Activated CD4-positive, alpha-beta T cell treated with anti-CD3 and anti-CD28 coated beads for 36 hours (primary cell): ENCODE measurements at regions of chr1 and their contacts with region 1.

Region 1: GRCh38 chr1:220926146-220926545 is 46.9 kb downstream of the HLX start:
- DNase-seq: no peak
- ATAC-seq: no peak
- H3K4me3 Mint-ChIP-seq: no peak overlapping the region
- H3K27ac Mint-ChIP-seq: no peak overlapping the region
- H3K4me1 Mint-ChIP-seq: no peaks in the 10 kb centered on the region
- H3K27me3 Mint-ChIP-seq: peaks cover 5% of the 10 kb centered on the region

Region 2: DNA sequence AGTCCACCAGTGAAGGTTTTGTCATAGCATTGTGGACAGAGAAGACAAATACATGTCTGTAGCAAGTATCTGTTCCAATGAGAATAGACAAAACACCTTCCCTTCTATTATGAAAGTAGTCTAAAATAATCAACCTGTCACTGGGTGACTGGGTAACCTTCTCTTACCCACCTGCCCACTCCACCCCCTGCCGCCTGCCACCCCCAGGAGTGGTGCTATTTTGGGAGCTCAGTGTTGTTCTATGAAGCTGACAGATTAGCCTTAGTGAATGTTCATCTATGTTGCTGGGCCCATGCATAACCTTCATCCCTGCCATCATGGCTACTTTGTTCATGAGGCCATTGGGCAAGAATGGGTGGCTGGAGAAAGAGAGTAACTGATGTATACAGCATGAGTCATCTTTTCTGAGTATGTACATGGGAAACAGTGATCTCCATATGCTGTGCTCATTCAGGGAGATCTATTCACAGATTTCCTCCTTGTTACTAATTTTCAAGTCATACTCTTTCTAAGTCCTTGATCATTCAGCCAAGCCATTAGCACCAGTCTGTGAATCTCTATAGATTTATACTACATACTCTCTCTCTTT is 373.4 kb before region 1 on chr1:
- CTCF ChIA-PET with region 1: no interaction called
- POLR2A ChIA-PET with region 1: no interaction called
- intact Hi-C with region 1: no loop called
- DNase-seq: no peak
- ATAC-seq: no peak
- H3K4me3 Mint-ChIP-seq: no peak overlapping the region
- H3K27ac Mint-ChIP-seq: no peak overlapping the region
- H3K4me1 Mint-ChIP-seq: no peaks in the 10 kb centered on the region
- H3K27me3 Mint-ChIP-seq: peaks cover 8% of the 10 kb centered on the region

Region 3: DNA sequence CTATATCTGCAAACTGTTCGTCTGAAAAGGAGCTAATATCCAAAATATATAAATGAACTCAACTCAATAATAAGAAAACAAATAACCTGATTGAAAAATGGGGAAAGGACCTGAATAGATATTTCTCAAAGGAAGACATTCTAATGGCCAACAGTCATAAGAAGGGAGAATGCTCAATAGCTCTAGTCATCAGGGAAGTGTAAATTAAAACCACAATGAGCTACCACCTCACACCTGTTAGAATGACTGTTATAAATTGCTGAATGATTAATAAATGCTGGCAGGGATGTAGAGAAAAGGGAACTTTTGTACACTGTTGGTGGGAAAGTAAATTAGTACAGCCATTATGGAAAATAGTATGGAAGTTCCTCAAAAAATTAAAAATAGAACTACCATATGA is 257.1 kb before region 1 on chr1:
- CTCF ChIA-PET with region 1: no interaction called
- POLR2A ChIA-PET with region 1: no interaction called
- intact Hi-C with region 1: no loop called
- DNase-seq: no peak
- ATAC-seq: no peak
- H3K4me3 Mint-ChIP-seq: no peak overlapping the region
- H3K27ac Mint-ChIP-seq: no peak overlapping the region
- H3K4me1 Mint-ChIP-seq: no peaks in the 10 kb centered on the region
- H3K27me3 Mint-ChIP-seq: peaks cover 8% of the 10 kb centered on the region

Region 4: DNA sequence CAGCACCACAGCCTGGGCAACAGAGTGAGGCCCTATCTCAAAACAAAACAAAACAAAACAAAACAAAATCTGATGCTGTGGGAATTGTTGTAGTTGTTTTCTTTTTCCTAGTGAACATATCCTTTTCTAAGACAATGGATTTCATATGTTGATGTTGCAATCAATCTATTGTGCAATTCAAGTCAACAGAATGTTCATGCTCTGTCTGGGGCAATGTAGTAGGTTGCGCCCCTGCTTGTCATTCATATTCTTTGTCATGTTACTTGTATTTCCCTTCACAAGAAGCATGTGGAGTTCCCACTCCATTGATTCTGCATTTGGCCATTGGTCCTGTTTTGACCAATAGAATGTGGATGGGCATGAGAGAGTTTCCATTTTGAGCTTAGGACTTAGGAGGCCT is 591.8 kb after region 1 on chr1:
- CTCF ChIA-PET with region 1: no interaction called
- POLR2A ChIA-PET with region 1: no interaction called
- intact Hi-C with region 1: loop called in 1 of 2 experiments (anchors 5 kb)
- DNase-seq: no peak
- ATAC-seq: no peak
- H3K4me3 Mint-ChIP-seq: no peak overlapping the region
- H3K27ac Mint-ChIP-seq: no peak overlapping the region
- H3K4me1 Mint-ChIP-seq: peaks cover 2% of the 10 kb centered on the region
- H3K27me3 Mint-ChIP-seq: no peaks in the 10 kb centered on the region